Activated CD4-positive, alpha-beta memory T cell treated with anti-CD3 and anti-CD28 coated beads, Interleukin-2, amount 10 ng/mL, durations not matched to agents 7 days and 5 days (primary cell): ENCODE measurements at regions of chr21 and their contacts with region 1.

Region 1: GRCh38 chr21:44338971-44339910 is at the start of gene CFAP410:
- DNase-seq: peak; percentile 96
- H3K4me3 Mint-ChIP-seq: peak within 1 kb of the TSS; percentile 86
- H3K27ac Mint-ChIP-seq: peak within 1 kb of the TSS; percentile 92
- H3K4me1 Mint-ChIP-seq: peaks cover 21% of the 10 kb centered on the region
- H3K27me3 Mint-ChIP-seq: no peaks in the 10 kb centered on the region
- total RNA-seq, gene CFAP410: 14.2 to 15.5 TPM

Region 2: DNA sequence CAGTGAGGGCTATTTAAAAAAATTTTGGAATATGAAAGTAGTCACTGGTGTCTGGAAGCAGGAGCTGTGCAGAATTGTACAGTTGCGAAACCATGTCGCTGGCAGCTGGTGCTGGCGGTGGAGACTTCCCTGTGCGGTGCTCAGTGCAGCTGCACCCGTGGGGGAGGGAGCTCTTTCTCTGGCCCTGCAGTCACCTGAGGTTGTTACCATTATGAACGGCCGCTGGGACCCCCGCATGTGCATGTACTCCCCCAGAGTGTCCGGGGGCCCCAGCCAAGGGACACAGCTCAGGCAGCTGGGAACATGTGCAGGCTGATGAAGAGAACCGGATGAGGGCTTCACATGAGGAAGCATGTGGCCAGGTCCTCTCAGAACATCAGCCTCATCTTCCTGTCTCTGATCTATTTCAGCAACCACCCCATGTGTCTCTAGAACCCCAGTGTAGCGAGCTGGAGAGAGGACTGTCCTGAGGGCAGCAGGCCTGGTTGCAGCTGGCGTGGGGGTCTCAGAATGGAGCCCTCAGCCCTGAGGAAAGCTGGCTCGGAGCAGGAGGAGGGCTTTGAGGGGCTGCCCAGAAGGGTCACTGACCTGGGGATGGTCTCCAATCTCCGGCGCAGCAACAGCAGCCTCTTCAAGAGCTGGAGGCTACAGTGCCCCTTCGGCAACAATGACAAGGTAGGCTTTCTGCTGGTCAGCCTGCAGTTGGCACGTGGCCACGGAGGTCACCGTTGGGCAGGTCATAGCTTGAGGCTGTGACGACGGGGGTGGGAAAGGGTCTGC is 14.1 kb after region 1 on chr21 and contains the start of gene TRPM2:
- CTCF ChIA-PET with region 1: interaction called, 4 read pairs
- POLR2A ChIA-PET with region 1: interaction called, 48 read pairs
- DNase-seq: peak; percentile 60
- H3K4me3 Mint-ChIP-seq: peak within 1 kb of the TSS; percentile 78
- H3K27ac Mint-ChIP-seq: peak within 1 kb of the TSS; percentile 71
- H3K4me1 Mint-ChIP-seq: peaks cover 48% of the 10 kb centered on the region
- H3K27me3 Mint-ChIP-seq: peaks cover 7% of the 10 kb centered on the region
- total RNA-seq, gene TRPM2: 13.7 to 14.8 TPM

Region 3: DNA sequence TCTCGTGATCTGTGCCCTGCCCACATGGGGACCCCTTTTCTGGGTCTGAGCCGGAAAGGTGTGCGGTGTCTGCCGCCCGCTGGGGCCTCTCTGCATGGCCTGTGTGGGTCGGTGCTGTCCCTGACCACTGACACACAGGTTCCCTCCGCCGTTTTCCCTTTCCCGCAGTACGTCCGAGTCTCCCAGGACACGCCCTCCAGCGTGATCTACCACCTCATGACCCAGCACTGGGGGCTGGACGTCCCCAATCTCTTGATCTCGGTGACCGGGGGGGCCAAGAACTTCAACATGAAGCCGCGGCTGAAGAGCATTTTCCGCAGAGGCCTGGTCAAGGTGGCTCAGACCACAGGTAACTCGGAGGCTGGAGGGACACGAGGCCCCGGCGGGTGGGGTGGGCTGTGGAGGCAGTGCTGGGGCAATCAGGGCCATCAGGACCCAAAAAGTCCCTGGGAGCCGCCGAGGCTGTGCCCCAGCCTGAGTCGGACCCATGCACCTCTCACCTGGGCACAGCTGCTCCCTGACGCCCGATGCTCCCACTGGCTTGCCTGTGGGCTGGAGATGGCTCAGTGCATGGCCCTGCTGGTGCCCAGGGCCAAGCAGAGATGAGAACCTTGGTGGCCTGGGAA is 27.5 kb after region 1 on chr21:
- CTCF ChIA-PET with region 1: no interaction called
- POLR2A ChIA-PET with region 1: no interaction called
- DNase-seq: no peak
- H3K4me3 Mint-ChIP-seq: no peak overlapping the region
- H3K27ac Mint-ChIP-seq: no peak overlapping the region
- H3K4me1 Mint-ChIP-seq: no peaks in the 10 kb centered on the region
- H3K27me3 Mint-ChIP-seq: peaks cover 5% of the 10 kb centered on the region

Region 4: DNA sequence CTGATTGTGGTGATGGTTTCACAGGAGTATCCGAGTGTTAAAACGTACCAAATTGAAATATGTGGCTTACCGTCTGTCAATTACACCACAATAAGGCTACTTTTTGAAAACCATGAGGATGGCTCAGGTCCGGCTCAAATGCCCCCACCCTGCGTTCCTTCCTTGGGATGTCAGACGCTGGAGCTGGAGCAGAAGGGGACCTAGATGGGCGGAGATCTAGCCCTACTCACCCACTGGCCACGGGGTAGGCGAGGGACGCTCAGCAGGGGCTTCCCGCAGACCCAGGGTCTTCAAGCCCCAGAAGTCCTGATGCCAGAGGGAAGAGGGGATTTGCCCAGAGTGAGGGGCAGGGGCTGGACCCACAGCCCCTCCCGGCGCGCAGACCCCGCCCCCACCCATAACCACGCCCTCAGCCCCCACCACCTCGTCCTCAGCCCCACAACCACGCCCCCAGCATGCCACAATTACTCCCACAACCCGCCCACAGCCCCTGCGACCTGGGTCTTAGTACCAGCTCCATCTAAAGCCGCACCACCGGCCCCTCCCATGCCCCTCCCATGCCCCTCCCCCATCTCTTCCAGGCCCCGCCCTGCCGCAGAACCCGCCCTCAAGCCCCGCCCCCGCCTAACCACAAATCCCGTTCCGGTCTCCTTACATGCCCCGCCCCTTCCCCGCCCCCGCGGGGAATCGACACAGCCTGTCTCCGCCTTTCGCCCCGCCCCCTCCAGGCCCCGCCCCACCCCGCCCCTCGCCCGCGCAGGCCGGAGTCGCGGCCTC is 115.7 kb after region 1 on chr21 and contains the start of gene LRRC3:
- CTCF ChIA-PET with region 1: no interaction called
- POLR2A ChIA-PET with region 1: interaction called, 21 read pairs
- DNase-seq: peak; percentile 88
- H3K4me3 Mint-ChIP-seq: peak within 1 kb of the TSS; percentile 76
- H3K27ac Mint-ChIP-seq: no peak within 1 kb of the TSS
- H3K4me1 Mint-ChIP-seq: peaks cover 5% of the 10 kb centered on the region
- H3K27me3 Mint-ChIP-seq: peaks cover 33% of the 10 kb centered on the region
- total RNA-seq, gene LRRC3: 3.7 to 3.8 TPM